Natural killer cell (primary cell): ENCODE measurements at regions of chr17 and their contacts with region 1.

Region 1: DNA sequence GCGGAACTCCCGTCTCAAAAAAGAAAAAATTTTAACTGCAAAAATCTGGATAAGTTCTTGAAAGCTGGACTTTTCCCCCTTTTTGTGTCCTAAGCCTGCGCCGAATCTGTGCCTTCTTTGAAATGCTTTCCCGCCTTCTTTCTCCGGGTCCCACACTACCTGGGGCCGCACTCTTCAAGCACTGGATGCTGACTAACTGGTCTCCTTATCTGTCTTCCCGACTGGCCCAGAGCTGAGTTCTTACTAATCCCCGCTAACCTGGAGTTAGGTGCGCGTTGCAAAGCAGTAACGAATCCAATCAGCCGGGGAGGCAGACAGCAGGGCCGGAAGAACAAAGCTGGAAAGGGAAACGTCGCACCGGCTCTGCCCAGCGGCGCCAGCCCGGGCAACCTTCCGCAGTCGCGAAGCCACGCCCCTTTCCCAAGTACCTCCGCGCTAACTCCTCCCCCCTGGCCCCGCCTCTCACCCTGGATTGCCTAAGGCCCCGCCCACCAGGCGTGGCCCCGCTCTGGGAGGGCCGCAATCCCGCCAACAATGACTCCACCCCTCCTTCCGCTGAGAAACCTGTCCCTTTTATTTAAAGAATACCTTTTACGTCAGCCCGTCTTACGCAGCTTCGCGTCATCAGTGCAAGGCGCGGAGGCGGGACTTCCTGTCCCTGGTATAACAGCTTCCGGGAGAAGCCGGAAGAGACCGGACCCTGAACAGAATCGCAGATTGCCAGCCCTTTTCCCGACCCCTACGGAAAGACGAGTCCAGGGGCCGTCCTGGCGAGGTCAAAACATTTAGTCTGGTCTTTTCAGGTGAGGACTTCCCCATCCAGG is at the start of gene TMUB2:
- DNase-seq: peak; percentile 99 to 100
- ATAC-seq: peak; percentile 94 to 100 (median 95)
- H3K4me3 ChIP-seq: peak within 1 kb of the TSS; percentile 90
- H3K4me3 Mint-ChIP-seq: peak within 1 kb of the TSS; percentile 100
- H3K27ac ChIP-seq: peak within 1 kb of the TSS; percentile 97
- H3K27ac Mint-ChIP-seq: peak within 1 kb of the TSS; percentile 92 to 99
- H3K4me1 ChIP-seq: peaks cover 25% of the 10 kb centered on the region
- H3K4me1 Mint-ChIP-seq: peaks cover 35 to 44% of the 10 kb centered on the region in 2 donors
- H3K27me3 ChIP-seq: no peaks in the 10 kb centered on the region
- H3K27me3 Mint-ChIP-seq: no peaks in the 10 kb centered on the region
- CTCF ChIP-seq: no peak
- total RNA-seq, gene TMUB2: 40.4 to 48.2 (median 41.0) TPM

Region 2: DNA sequence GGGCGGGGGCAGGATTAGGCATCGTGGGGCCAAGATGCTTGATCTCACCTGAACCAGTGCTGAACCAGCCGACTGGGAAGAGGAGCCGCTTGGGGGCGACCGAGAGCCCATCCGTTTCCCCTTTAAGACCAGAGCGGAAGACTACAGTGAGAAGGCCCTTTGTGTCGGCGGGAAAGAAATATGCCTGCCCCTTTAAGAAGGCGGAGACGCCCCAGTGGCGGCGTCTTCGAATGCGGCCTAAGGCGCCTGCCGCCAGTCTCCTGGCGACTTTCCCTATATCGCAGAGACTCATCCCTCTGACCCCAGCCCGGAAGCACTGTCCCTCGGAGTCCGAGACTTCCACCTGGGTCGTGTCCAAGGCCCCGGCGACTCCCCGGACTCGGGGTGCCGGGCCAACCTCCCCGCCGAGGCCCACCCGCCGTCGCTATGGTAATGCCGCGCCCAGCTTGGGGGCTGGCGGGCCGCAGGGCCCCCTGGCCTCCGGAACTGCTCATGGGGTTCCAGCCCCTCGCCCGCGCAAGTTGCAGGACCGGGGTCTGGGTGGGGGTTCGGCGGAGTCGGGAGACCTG is 44.7 kb before region 1 on chr17 and contains the start of gene HROB:
- intact Hi-C with region 1: loop called (anchors 1 kb)
- DNase-seq: peak; percentile 98 to 99
- ATAC-seq: peak; percentile 97 to 99 (median 97)
- H3K4me3 ChIP-seq: peak within 1 kb of the TSS; percentile 53
- H3K4me3 Mint-ChIP-seq: peak within 1 kb of the TSS; percentile 83
- H3K27ac ChIP-seq: peak within 1 kb of the TSS; percentile 73
- H3K27ac Mint-ChIP-seq: peak within 1 kb of the TSS; percentile 73 to 83
- H3K4me1 ChIP-seq: peaks cover 15% of the 10 kb centered on the region
- H3K4me1 Mint-ChIP-seq: peaks cover 0 to 6% of the 10 kb centered on the region in 2 donors
- H3K27me3 ChIP-seq: peaks cover 9% of the 10 kb centered on the region
- H3K27me3 Mint-ChIP-seq: peaks cover 11 to 14% of the 10 kb centered on the region in 2 donors
- CTCF ChIP-seq: peak; percentile 88
- total RNA-seq, gene HROB: 1.9 to 4.4 (median 2.4) TPM

Region 3: GRCh38 chr17:44199553-44200477 is 13.3 kb after region 1 on chr17 and contains the start of gene ATXN7L3:
- intact Hi-C with region 1: loop called (anchors 1 kb)
- DNase-seq: peak; percentile 95 to 99
- ATAC-seq: peak; percentile 83 to 94 (median 84)
- H3K4me3 ChIP-seq: peak within 1 kb of the TSS; percentile 76
- H3K4me3 Mint-ChIP-seq: peak within 1 kb of the TSS; percentile 89
- H3K27ac ChIP-seq: peak within 1 kb of the TSS; percentile 90
- H3K27ac Mint-ChIP-seq: peak within 1 kb of the TSS; percentile 87 to 96
- H3K4me1 ChIP-seq: peaks cover 33% of the 10 kb centered on the region
- H3K4me1 Mint-ChIP-seq: peaks cover 34 to 52% of the 10 kb centered on the region in 2 donors
- H3K27me3 ChIP-seq: no peaks in the 10 kb centered on the region
- H3K27me3 Mint-ChIP-seq: no peaks in the 10 kb centered on the region
- CTCF ChIP-seq: no peak
- total RNA-seq, gene ATXN7L3: 87.6 to 112 (median 109) TPM

Region 4: DNA sequence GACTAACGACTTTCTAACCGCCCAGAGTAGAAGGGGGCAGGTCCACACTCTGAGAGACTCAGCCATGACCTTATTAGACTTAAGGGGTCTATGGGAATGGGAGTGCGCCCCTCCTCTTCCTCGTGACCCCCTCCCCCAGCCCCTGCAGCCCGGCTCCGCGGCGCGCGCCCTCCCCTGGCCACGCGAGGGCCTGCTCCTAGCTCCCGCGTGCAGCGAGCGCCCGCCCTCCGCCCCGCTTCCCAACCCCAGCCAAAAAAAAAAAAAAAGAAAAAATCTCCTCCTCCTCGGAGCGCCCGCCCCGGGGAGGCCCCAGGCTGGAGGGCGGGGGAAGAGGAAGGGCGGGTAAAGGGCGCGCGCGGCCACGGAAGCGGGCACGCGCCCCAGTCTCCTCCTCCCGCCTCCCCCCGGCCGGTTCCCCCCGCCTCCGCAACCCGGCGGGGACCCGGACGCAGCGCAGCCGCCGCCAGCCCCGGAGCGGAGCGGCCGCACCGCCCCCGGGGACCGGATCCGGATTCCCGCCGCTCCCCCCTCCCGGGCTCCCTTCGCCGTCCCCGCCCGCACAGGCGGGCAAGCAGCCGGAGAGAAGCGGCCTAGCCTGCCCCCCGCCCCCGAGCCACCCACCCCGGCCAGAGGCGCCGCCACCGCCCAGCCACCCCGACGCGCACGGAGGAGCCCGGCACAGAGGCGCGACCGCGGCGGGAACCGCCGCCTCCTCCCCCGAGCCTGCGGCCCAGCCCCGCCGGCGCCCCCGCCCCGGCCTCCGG is 32.0 kb after region 1 on chr17:
- intact Hi-C with region 1: loop called (anchors 2 kb)
- DNase-seq: peak; percentile 84 to 95
- ATAC-seq: peak; percentile 61 to 83 (median 66)
- H3K4me3 ChIP-seq: peak overlapping the region; percentile 53
- H3K4me3 Mint-ChIP-seq: peak overlapping the region; percentile 70
- H3K27ac ChIP-seq: peak overlapping the region; percentile 72
- H3K27ac Mint-ChIP-seq: peak overlapping the region; percentile 72 to 77
- H3K4me1 ChIP-seq: peaks cover 62% of the 10 kb centered on the region
- H3K4me1 Mint-ChIP-seq: peaks cover 42 to 55% of the 10 kb centered on the region in 2 donors
- H3K27me3 ChIP-seq: no peaks in the 10 kb centered on the region
- H3K27me3 Mint-ChIP-seq: no peaks in the 10 kb centered on the region
- CTCF ChIP-seq: peak; percentile 9